Activated CD4-positive, alpha-beta memory T cell treated with anti-CD3 and anti-CD28 coated beads for 36 hours (primary cell): ENCODE measurements at regions of chr18 and their contacts with region 1.

Region 1: DNA sequence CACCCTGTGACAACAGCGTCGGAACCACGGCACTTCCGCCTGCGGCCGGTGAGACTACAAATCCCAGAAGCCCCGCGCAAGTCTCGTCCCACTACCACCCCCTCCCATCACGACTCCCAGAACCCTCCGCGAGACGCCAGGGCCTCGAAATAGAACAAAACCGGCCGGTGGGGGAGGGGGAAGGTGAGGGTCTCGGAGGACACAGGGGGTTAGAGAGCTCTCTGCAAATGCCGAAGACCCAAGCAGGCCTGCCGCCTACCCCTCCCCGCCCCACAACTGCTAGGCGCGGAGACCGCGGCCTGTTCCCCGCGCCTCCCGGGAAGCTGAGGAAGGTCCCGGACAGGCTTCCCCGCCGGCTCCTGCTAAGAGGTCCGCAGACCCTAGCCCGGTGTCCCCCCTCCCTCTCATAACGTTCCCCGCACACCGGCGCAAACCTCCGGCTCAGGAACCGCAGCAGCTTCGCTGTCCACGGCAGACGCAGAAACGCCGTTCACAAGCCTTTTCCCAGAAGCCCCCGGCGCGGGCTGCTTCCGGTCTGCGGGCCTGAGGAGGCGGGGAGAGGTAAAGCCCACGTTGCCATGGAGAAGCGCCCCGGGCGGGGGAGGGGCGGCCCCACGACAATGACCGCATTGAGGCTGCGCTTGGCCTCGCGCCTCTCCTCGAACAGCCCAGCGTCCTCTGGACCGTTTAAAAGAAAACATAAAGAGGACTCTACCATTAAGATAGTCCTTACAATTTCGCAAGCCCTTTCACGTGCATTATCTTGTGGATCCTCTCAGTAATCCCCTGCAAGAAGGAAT is at the start of gene ZNF24:
- DNase-seq: peak; percentile 95
- H3K4me3 Mint-ChIP-seq: peak within 1 kb of the TSS; percentile 87
- H3K27ac Mint-ChIP-seq: peak within 1 kb of the TSS; percentile 96
- H3K4me1 Mint-ChIP-seq: peaks cover 45% of the 10 kb centered on the region
- H3K27me3 Mint-ChIP-seq: no peaks in the 10 kb centered on the region
- total RNA-seq, gene ZNF24: 40.6 to 48.6 TPM

Region 2: DNA sequence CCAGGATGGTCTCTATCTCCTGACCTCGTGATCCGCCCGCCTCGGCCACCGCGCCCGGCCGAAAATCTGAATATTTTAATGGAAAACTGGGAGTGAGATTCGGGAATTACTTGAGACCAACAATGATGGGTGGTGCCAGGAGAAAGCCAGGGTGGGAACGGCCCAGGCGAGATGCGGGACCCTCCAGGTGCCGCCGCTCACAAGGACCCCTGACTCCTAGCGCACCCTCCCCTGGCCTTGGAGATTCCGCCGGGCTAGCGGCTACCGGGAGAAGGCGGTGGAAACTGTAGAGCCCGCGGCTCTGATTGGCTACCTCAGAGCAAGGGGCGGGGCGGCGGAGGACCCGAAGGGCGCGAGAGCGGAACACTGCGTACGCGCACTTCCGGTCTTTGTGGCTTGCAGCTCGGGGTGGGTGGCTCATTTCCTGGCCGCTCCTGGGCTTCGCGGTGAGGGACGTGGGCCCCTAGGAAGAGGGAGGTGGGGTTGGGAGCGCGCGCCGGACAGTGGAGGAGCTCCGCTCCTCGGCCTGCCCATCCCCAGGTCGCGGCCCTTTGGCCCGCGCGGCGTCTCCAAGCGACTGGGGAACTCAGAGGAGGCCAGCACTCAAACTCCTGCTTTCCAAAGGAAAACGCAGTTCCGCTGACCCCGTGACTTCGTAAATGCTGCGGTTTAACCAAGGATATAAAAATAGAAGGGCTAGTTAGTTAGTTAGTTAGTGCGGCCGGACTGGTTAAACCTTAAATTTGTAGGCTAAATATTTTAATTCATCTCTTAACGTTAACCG is 103.3 kb before region 1 on chr18 and contains the start of gene ZNF397:
- CTCF ChIA-PET with region 1: interaction called, 6 read pairs
- POLR2A ChIA-PET with region 1: interaction called, 12 read pairs
- intact Hi-C with region 1: loop called (anchors 1 kb)
- DNase-seq: peak; percentile 98
- H3K4me3 Mint-ChIP-seq: peak within 1 kb of the TSS; percentile 96
- H3K27ac Mint-ChIP-seq: peak within 1 kb of the TSS; percentile 98
- H3K4me1 Mint-ChIP-seq: peaks cover 26% of the 10 kb centered on the region
- H3K27me3 Mint-ChIP-seq: no peaks in the 10 kb centered on the region
- total RNA-seq, gene ZNF397: 19.2 to 19.6 TPM

Region 3: GRCh38 chr18:35355140-35355618 is 11.0 kb after region 1 on chr18:
- CTCF ChIA-PET with region 1: interaction called, 14 read pairs
- POLR2A ChIA-PET with region 1: no interaction called
- intact Hi-C with region 1: no loop called
- DNase-seq: peak; percentile 71
- H3K4me3 Mint-ChIP-seq: no peak overlapping the region
- H3K27ac Mint-ChIP-seq: no peak overlapping the region
- H3K4me1 Mint-ChIP-seq: peaks cover 5% of the 10 kb centered on the region
- H3K27me3 Mint-ChIP-seq: no peaks in the 10 kb centered on the region

Region 4: DNA sequence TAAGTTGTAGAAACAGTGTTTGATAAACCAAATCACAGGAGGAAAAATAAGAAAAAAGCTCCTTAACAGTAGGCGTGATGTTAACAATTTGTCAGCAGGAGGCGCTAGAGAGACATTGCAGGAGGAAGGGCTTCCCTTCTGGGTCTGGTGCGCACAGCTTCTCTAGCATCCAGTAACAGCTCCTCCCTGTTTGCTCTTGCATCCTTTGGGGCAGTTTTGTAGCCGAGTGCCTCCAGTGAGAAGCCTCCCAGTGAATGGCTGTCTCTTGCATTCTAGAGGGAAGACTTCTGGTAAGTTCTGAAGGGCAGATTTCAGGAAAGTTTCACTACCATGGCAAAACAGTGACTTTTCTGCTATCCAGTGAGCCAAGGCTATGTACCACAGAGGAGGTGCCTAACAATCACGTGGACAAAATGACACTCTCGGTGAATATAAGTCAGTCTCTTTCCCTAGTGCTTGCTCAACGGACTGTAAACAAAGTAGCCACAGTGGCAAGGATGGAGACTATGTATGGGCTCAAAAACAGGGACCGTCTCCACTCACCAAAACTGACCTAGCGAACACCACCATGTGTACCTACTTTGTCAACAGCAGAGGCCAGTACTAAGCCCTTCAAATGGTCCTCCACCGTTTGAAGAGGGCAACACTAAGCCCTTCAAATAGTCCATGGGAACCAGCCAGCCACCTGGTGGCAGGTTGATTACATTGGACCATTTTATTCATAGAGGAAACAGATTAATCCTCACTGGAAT is 42.6 kb after region 1 on chr18:
- CTCF ChIA-PET with region 1: interaction called, 11 read pairs
- POLR2A ChIA-PET with region 1: no interaction called
- intact Hi-C with region 1: no loop called
- DNase-seq: peak; percentile 69
- H3K4me3 Mint-ChIP-seq: no peak overlapping the region
- H3K27ac Mint-ChIP-seq: no peak overlapping the region
- H3K4me1 Mint-ChIP-seq: peaks cover 2% of the 10 kb centered on the region
- H3K27me3 Mint-ChIP-seq: peaks cover 16% of the 10 kb centered on the region